Mammary epithelial cell (primary cell): ENCODE measurements at regions of chr17 and their contacts with region 1.

Region 1: DNA sequence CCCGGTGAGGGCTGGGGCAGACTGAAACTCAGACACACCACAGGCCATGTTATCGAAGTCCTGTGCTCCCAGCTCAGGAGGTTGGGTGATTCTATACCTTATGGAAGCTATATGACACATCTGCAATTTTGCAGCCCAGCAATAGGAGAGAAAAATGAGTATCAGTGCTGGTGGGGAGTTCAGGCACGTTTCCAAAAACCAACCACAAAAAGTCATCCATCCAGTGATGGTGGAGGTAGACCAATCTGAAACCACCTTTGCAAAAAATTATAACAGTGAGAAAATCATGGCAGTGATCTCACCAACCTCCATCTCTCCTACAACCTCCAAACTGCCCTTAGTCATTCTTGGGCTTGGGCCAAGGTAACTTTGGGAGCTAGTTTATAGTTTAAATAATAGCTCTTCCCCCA is 327.9 kb downstream of the SLC39A11 start:
- DNase-seq: peak; percentile 22
- H3K4me3 ChIP-seq: no peak overlapping the region
- H3K27ac ChIP-seq: no peak overlapping the region
- H3K4me1 ChIP-seq: no peaks in the 10 kb centered on the region
- H3K27me3 ChIP-seq: no peaks in the 10 kb centered on the region
- CTCF ChIP-seq: no peak

Region 2: DNA sequence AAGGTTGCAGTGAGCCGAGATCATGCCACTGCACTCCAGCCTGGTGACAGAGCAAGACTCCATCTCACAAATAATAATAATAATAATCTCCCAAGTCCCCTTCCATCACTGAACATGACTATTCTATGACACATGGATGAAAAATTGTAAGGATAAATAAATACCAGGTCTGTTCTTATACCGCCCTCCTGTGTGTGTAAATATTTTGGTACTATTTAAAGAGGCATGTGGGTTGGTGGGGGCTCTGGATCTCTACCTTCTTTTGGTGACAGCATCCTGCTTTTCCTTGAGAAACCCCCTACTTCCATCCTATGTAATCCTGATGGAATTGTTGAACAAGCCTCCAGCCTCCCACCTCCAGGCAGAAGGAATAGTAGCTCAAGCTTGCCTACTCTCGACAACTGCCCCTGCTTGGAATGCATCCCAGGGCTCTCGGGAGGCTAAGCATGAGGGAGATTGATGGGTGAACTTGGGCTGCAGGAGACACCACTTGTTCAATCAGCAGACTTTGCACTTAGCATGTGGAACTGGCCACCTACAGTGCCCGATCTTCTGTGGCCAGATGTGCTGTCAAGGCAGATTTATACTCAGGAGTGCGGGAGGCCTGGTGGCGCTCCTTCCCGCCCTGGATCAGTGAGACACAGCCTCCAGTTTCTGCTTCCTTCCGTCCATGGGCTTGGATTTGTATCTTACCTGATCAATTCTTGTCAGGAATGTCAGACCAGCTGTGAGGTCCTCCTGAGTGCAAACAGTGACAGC is 40.5 kb after region 1 on chr17:
- CTCF ChIA-PET with region 1: no interaction called
- dilution Hi-C with region 1: loop called (anchors 5 kb)
- in situ Hi-C with region 1: no loop called
- intact Hi-C with region 1: no loop called
- DNase-seq: no peak
- H3K4me3 ChIP-seq: no peak overlapping the region
- H3K27ac ChIP-seq: no peak overlapping the region
- H3K4me1 ChIP-seq: no peaks in the 10 kb centered on the region
- H3K27me3 ChIP-seq: no peaks in the 10 kb centered on the region
- CTCF ChIP-seq: no peak

Region 3: GRCh38 chr17:72976971-72977770 is 212.5 kb after region 1 on chr17:
- CTCF ChIA-PET with region 1: no interaction called
- dilution Hi-C with region 1: no loop called
- in situ Hi-C with region 1: no loop called
- intact Hi-C with region 1: loop called (anchors 10 kb)
- DNase-seq: peak; percentile 33
- H3K4me3 ChIP-seq: no peak overlapping the region
- H3K27ac ChIP-seq: no peak overlapping the region
- H3K4me1 ChIP-seq: no peaks in the 10 kb centered on the region
- H3K27me3 ChIP-seq: no peaks in the 10 kb centered on the region
- CTCF ChIP-seq: no peak